OCI-LY7 (cell line): ENCODE measurements at regions of chr2 and their contacts with region 1.

Region 1: GRCh38 chr2:231394211-231395141 is 1.0 kb upstream of the B3GNT7 start:
- DNase-seq: peak; percentile 91
- H3K4me3 ChIP-seq: peak overlapping the region; percentile 79
- H3K27ac ChIP-seq: peak overlapping the region; percentile 97
- H3K4me1 ChIP-seq: peaks cover 50% of the 10 kb centered on the region
- CTCF ChIP-seq: peak; percentile 79

Region 2: DNA sequence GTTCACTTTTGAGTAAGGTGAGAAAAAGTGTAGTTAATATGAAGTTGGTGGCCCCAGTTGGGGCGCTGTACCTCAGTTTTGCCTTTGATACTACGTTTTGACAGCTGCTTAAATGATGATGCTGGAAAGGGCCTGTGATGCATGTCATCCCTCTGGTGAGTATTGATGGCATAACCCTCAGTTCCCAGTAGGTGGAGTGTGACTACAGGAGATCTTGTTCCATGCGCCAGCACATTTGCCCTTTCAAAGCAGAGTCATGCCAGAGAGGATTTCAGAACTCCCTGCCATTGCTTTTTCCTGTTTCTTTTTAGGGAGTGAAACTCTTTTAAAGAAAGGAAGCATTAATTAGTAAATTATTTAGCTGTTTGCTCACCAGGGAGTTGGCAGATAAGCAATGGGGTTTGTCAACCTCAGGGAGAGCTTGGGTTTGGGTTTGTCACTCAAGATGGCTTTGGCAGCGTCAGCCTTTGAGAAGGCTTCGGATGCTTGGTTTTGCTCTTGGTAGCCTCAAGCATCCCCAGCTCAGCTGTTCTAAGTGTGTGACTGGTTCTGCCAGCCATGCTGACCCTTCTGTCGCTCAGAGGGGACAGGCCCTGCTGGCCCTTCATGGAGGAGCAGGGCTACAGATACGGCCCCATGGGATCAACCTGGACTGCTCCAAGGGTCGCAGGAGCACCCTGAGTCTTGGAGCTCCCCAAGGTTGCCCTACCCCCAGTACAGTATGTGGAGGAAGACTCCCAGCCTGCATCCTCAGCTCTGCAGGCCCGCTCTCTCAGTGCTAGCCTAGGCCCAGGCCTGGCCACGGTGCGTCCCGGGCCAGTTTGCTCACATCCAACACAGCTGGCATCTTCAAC is 166.9 kb before region 1 on chr2:
- CTCF ChIA-PET with region 1: interaction called, 12 read pairs
- POLR2A ChIA-PET with region 1: interaction called, 15 read pairs
- intact Hi-C with region 1: loop called (anchors 1 kb)
- DNase-seq: peak; percentile 84
- H3K4me3 ChIP-seq: no peak overlapping the region
- H3K27ac ChIP-seq: peak overlapping the region; percentile 66
- H3K4me1 ChIP-seq: peaks cover 36% of the 10 kb centered on the region
- CTCF ChIP-seq: peak; percentile 97

Region 3: GRCh38 chr2:231297108-231297908 is 97.2 kb before region 1 on chr2:
- CTCF ChIA-PET with region 1: interaction called, 8 read pairs
- POLR2A ChIA-PET with region 1: interaction called, 8 read pairs
- intact Hi-C with region 1: loop called (anchors 1 kb)
- DNase-seq: peak; percentile 82
- H3K4me3 ChIP-seq: peak overlapping the region; percentile 35
- H3K27ac ChIP-seq: no peak overlapping the region
- H3K4me1 ChIP-seq: peaks cover 36% of the 10 kb centered on the region
- CTCF ChIP-seq: peak; percentile 89

Region 4: GRCh38 chr2:231308631-231309428 is 85.6 kb before region 1 on chr2:
- CTCF ChIA-PET with region 1: interaction called, 4 read pairs
- POLR2A ChIA-PET with region 1: interaction called, 6 read pairs
- intact Hi-C with region 1: loop called (anchors 5 kb)
- DNase-seq: no peak
- H3K4me3 ChIP-seq: no peak overlapping the region
- H3K27ac ChIP-seq: no peak overlapping the region
- H3K4me1 ChIP-seq: peaks cover 31% of the 10 kb centered on the region
- CTCF ChIP-seq: no peak

Region 5: GRCh38 chr2:231361671-231362554 is 32.6 kb before region 1 on chr2:
- CTCF ChIA-PET with region 1: interaction called, 7 read pairs
- POLR2A ChIA-PET with region 1: interaction called, 8 read pairs
- intact Hi-C with region 1: loop called (anchors 2 kb)
- DNase-seq: peak; percentile 76
- H3K4me3 ChIP-seq: no peak overlapping the region
- H3K27ac ChIP-seq: no peak overlapping the region
- H3K4me1 ChIP-seq: peaks cover 18% of the 10 kb centered on the region
- CTCF ChIP-seq: peak; percentile 61

Region 6: GRCh38 chr2:231383416-231384108 is 10.9 kb before region 1 on chr2:
- CTCF ChIA-PET with region 1: no interaction called
- POLR2A ChIA-PET with region 1: no interaction called
- intact Hi-C with region 1: no loop called
- DNase-seq: no peak
- H3K4me3 ChIP-seq: no peak overlapping the region
- H3K27ac ChIP-seq: no peak overlapping the region
- H3K4me1 ChIP-seq: no peaks in the 10 kb centered on the region
- CTCF ChIP-seq: no peak

Region 7: DNA sequence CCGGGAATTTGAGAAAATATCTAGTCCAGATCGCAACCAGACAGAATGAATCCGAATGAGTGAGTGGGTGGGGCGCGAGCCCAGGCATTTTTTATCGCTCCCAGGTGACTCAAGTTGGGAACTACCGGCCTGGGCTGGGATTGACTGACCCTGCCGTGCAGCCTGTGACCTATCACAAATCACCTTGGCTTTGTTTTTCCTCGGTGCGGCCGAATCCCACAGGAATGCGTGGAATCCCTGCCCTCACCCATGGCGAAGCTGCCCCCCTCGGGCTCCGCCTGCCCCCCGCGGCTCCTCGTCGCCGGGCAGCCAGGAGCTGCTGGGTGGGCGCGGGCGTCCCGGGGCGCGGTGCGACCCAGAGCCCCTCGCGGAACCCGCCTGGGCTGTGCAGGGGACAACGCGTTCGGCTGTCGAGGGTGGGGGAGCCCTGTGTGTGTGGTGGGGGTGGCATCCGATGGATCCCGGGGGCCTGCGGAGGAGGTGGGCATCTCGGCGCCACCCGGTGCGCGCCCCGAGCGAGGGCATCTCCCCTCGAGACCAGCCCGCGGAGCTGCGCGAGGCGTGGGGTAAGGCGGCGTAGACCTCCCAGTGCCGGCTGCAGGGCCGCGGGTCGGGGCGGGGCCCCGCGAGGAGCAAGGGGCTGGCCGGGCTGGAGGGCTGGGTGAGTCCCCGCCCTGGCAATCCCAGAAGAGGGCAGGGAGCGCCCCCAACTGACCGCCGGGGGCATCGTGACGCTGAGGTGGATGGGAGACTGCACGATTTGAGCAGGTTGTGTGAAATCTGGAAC is 17.5 kb after region 1 on chr2:
- CTCF ChIA-PET with region 1: interaction called, 10 read pairs
- POLR2A ChIA-PET with region 1: interaction called, 3 read pairs
- intact Hi-C with region 1: no loop called
- DNase-seq: peak; percentile 20
- H3K4me3 ChIP-seq: no peak overlapping the region
- H3K27ac ChIP-seq: no peak overlapping the region
- H3K4me1 ChIP-seq: no peaks in the 10 kb centered on the region
- CTCF ChIP-seq: peak; percentile 68

Region 8: DNA sequence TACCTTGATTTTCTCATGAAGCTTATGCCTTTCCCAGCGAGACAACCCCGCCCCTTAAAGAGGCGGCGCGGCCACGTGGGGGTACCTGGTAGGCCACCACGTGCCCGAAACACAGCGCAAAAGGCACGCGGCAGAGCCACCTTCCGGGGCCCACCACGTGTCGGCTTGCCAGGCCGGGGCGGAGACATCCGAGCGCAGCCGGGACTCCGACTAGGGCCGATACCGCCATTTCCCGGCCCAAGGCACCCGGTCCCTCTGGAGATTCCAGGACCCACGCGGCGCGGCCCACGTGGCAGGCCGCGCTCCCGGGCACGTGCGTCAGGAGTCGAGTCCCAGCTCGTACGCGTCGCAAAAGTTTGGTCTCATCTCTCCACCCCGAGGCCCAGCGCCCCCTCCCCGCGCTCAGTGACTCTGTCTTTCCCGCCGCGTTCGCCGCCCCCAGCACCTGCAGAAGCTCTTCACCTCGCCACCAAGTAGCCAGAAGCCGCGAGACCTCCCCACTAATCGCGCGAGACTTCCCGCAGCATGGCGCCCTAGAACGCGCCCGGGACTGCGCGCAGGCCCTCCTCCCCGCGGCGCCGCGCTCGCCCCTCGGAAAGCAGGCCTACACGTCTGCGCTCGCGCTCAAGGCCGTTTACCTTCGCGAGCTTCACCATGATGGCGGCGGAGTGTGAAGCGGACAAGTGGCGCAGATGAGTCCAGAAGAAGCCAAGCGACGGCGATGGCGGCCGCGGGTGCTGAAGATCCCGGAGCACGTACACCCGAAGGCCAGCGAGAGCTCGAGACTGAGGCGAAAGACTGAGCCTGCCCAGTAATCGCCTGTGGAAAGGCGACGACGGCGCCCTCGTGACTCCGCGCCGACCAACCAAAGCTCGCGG is 69.5 kb after region 1 on chr2 and contains the start of gene NCL:
- CTCF ChIA-PET with region 1: no interaction called
- POLR2A ChIA-PET with region 1: interaction called, 3 read pairs
- intact Hi-C with region 1: loop called (anchors 1 kb)
- DNase-seq: peak; percentile 92
- H3K4me3 ChIP-seq: peak within 1 kb of the TSS; percentile 94
- H3K27ac ChIP-seq: peak within 1 kb of the TSS; percentile 88
- H3K4me1 ChIP-seq: peaks cover 28% of the 10 kb centered on the region
- CTCF ChIP-seq: no peak
- total RNA-seq, gene NCL: 255 and 413 TPM in 2 replicates

Region 9: DNA sequence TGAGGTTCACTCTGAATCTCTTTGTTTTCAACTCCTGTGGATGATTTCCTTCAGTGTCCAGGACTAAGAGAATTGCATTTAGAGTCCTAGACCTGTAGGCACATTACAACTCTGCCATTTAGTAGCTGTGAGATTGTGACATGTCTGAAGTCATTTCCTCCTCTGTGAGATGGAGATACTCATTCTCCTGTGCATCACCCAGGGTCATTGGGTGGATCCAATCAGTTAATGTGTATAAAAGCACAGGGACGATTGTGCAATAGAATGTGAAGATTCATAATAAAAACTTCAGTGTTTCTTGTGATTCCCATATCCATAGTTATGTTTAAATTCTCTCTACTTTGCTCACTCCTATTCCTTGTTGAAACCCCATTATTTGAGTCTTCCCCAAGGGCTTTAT is 680.6 kb after region 1 on chr2:
- CTCF ChIA-PET with region 1: no interaction called
- POLR2A ChIA-PET with region 1: no interaction called
- intact Hi-C with region 1: no loop called
- DNase-seq: no peak
- H3K4me3 ChIP-seq: no peak overlapping the region
- H3K27ac ChIP-seq: no peak overlapping the region
- H3K4me1 ChIP-seq: peaks cover 5% of the 10 kb centered on the region
- CTCF ChIP-seq: no peak